Dendritic cell treated with granulocyte-macrophage colony-stimulating factor and Interleukin-4, amounts not matched to agents 40 ng/mL and 50 ng/mL, for 4 days (primary cell): ENCODE measurements at regions of chr10 and their contacts with region 1.

Region 1: DNA sequence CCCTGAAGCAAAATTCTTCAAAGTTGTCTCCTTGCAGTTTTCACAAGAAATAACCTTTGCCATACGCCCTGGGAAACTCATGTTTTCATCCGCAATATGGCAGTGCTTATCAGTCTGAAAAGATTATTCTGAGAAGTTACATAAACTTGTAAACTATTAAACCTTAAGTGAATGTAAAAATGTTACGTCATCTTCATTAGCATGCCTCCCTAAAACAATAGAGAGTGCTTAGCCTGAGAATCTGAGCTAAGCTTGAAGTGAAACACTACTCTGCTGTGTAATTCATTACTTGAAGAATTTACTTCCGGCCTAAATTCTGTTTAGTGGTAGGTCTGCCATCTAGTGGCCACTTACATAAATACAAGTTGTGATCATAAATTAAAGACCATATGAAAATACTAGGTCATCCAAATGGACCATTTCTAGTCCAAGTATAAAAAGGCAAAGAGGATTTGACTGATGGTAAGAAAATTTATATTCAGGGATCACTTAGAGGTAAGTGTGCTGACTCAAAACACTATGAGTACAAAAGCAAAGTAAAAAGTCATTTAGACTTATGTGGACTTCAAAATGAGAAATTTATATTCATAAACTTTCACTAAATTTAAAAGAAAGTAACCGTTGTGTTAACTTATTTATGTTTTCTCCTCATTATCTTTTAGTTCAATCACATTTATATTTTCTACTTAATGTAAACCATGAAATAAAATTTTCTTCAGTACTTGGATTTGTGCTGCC is 745.1 kb upstream of the LRRTM3 start:
- H3K4me3 Mint-ChIP-seq: no peak overlapping the region
- H3K27ac Mint-ChIP-seq: no peak overlapping the region
- H3K4me1 Mint-ChIP-seq: no peaks in the 10 kb centered on the region
- H3K27me3 Mint-ChIP-seq: no peaks in the 10 kb centered on the region

Region 2: GRCh38 chr10:64733980-64734379 is 1446.8 kb before region 1 on chr10:
- intact Hi-C with region 1: loop called (anchors 5 kb)
- H3K4me3 Mint-ChIP-seq: no peak overlapping the region
- H3K27ac Mint-ChIP-seq: no peak overlapping the region
- H3K4me1 Mint-ChIP-seq: peaks cover 19% of the 10 kb centered on the region
- H3K27me3 Mint-ChIP-seq: no peaks in the 10 kb centered on the region

Region 3: GRCh38 chr10:66272320-66272719 is 91.6 kb after region 1 on chr10:
- intact Hi-C with region 1: no loop called
- H3K4me3 Mint-ChIP-seq: no peak overlapping the region
- H3K27ac Mint-ChIP-seq: no peak overlapping the region
- H3K4me1 Mint-ChIP-seq: no peaks in the 10 kb centered on the region
- H3K27me3 Mint-ChIP-seq: no peaks in the 10 kb centered on the region

Region 4: DNA sequence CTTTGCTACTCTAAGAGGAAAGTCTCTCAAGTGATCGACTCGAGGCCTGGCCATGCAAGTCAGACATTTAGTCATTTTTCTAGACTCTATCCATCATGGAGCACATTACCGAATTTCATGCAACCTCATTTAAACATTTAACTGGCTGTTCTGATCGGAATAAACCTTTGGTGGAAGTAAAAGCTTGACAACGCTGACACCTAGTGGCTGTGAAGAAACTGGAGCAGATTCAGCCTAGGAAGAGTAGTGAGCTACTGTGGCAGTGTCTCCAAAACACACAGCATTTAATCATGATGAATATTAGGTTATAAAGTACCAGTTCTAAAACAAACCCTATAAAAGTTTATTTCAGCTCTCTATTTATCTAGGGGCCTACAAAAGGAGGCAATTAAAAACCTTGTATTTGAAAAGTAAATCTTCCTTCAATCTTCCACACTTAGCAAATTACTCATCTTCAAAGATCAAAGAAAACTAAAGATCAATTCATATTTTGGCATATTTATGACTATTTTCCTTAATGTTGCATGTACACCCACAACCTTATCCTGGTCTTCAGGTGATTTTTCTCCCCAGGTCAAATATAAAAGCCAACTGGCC is 1340.3 kb after region 1 on chr10:
- intact Hi-C with region 1: loop called (anchors 5 kb)
- H3K4me3 Mint-ChIP-seq: no peak overlapping the region
- H3K27ac Mint-ChIP-seq: no peak overlapping the region
- H3K4me1 Mint-ChIP-seq: no peaks in the 10 kb centered on the region
- H3K27me3 Mint-ChIP-seq: no peaks in the 10 kb centered on the region